AG04449 (cell line): ENCODE measurements at regions of chr17 and their contacts with region 1.

Region 1: GRCh38 chr17:63406689-63407330 is 39.3 kb downstream of the CYB561 start:
- DNase-seq: peak; percentile 62
- H3K4me3 ChIP-seq: no peak overlapping the region
- CTCF ChIP-seq: peak; percentile 81

Region 2: GRCh38 chr17:62671583-62672312 is 735.1 kb before region 1 on chr17:
- CTCF ChIA-PET with region 1: interaction called, 10 read pairs
- POLR2A ChIA-PET with region 1: no interaction called
- DNase-seq: no peak
- H3K4me3 ChIP-seq: no peak overlapping the region
- CTCF ChIP-seq: no peak

Region 3: GRCh38 chr17:63094636-63095035 is 312.2 kb before region 1 on chr17:
- CTCF ChIA-PET with region 1: interaction called, 20 read pairs
- POLR2A ChIA-PET with region 1: no interaction called
- DNase-seq: no peak
- H3K4me3 ChIP-seq: no peak overlapping the region
- CTCF ChIP-seq: no peak

Region 4: DNA sequence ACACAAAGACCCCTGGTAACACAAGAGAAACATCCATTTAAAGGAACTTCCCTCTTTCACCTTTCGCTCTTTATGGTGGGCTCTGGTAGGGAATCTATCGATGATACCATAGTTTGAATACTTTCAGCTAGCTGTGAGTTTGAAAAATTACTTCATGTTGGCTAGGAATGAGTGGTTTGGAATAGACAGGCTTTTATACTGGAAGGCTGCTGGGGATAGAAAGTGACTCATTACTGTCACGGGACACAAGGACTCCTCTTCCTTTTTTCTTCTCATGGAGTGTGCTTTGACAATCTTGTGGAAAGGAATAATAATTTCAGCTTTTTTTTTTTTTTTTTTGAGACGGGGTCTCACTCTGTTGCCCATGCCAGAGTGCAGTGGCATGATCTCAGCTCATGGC is 37.6 kb before region 1 on chr17:
- CTCF ChIA-PET with region 1: interaction called, 19 read pairs
- POLR2A ChIA-PET with region 1: no interaction called
- DNase-seq: no peak
- H3K4me3 ChIP-seq: no peak overlapping the region
- CTCF ChIP-seq: no peak

Region 5: DNA sequence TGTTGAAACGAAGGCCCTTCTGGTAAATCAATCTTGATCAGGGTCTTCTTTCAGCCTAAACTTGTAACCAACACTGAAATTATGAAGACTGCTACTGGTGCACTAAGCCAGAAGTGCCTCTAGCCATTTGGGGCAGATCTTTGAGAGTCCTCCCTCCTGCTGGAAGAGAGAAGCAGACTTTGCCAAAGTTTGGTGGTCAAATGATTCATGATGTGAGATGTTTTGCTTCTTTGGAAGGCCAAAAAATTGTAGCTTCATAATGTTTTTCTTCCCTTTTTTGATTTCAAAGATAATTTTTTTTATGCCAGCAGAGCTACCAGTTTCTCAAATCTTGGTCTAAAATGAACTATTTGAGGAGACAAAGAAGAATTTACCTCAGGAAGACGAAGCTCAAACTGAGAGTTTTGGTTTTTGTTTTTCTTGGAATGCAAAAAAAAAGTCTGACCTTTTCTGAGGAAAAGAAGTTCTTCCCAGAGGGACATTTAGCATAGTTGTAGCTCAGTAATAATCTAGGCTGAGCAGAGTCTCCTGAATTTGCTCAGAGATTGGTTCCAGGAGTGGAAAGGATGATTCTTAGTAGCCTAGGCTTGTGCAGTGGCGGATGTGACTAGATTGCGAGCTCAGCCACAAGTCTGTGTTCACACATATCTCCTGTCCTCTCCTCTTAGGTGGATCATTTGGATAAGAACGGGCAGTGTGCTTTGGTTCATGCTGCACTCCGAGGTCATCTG is 11.6 kb before region 1 on chr17:
- CTCF ChIA-PET with region 1: interaction called, 41 read pairs
- POLR2A ChIA-PET with region 1: no interaction called
- DNase-seq: peak; percentile 26
- H3K4me3 ChIP-seq: no peak overlapping the region
- CTCF ChIP-seq: no peak

Region 6: GRCh38 chr17:63611354-63611753 is 204.5 kb after region 1 on chr17:
- CTCF ChIA-PET with region 1: interaction called, 14 read pairs
- POLR2A ChIA-PET with region 1: no interaction called
- DNase-seq: no peak
- H3K4me3 ChIP-seq: no peak overlapping the region
- CTCF ChIP-seq: no peak